HepG2 (cell line): ENCODE measurements at regions of chr10 and their contacts with region 1.

Region 1: DNA sequence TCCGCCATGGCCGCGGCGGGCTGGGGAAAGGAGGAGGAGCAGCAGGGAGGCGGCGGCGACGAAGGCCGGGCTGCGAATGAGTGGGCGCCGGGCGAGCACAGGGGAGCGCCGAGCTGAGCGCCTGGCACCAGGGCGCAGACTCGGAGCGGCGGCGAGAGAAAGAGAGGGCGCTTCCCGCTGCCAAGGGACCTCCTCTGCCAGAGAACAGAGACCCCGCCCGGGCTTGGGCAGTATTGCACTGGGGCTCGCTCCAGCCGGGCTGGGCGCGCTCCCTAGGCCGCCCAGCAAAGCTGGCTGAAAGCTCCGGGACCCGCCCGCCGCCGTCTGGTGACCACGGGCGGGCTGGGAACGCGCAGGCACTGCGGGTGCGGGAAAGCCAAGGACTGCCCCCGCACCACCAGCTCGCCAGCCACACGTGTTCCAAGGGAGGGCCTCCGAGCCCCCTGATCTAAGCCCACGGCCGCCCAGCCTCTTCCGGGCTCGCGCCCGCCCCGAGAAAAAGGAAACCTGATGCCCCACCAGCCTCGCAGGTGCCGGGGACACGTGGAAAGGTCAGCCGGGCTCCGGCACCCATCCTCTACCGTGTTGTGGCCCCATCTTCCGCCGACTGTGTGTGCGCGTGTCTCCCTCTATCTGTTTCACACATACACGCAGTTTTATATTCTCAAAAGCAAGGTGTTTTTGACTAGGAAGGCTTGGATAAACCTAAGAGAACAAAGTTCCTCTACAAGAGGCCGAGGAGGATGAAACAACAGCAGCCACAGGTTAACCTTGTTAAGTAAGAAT is at the start of gene CCDC6:
- DNase-seq: peak; percentile 86
- ATAC-seq: peak; percentile 93
- H3K4me3 ChIP-seq: peak within 1 kb of the TSS; percentile 94 to 100 (median 97)
- H3K27ac ChIP-seq: peak within 1 kb of the TSS; percentile 90
- H3K4me1 ChIP-seq: peaks cover 53% of the 10 kb centered on the region
- H3K27me3 ChIP-seq: no peaks in the 10 kb centered on the region; a peak in 1 of 5 replicates
- CTCF ChIP-seq: peak; percentile 87
- EP300 ChIP-seq: no peak
- POLR2A ChIP-seq: peak; percentile 78 to 81
- RAD21 ChIP-seq: peak; percentile 77
- total RNA-seq, gene CCDC6: 18.3 and 34.1 TPM in 2 replicates

Region 2: DNA sequence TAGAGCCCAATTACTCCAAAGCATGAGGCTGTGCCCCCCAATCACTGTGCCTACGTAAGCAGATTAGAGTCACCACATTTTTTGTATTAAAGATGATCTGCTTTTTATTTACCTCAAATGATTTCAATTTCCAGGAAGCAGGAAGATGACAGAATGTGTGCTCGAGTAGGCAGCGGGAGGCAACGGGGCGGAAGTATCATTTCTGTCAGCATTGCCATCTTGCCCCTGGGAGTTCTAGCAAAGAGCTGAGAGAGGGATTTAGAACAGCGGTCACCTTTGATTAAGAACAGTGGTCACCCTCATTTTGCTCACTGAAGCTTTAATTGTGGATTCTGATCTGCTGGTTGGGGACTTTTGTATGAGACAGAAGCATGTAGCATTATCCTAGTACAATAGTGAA is 427.2 kb before region 1 on chr10:
- CTCF ChIA-PET with region 1: no interaction called
- POLR2A ChIA-PET with region 1: no interaction called
- in situ Hi-C with region 1: no loop called
- intact Hi-C with region 1: no loop called
- DNase-seq: no peak
- ATAC-seq: no peak
- H3K4me3 ChIP-seq: no peak overlapping the region
- H3K27ac ChIP-seq: no peak overlapping the region
- H3K4me1 ChIP-seq: no peaks in the 10 kb centered on the region
- H3K27me3 ChIP-seq: no peaks in the 10 kb centered on the region; a peak in 1 of 5 replicates
- CTCF ChIP-seq: no peak
- EP300 ChIP-seq: no peak
- POLR2A ChIP-seq: no peak
- RAD21 ChIP-seq: no peak

Region 3: DNA sequence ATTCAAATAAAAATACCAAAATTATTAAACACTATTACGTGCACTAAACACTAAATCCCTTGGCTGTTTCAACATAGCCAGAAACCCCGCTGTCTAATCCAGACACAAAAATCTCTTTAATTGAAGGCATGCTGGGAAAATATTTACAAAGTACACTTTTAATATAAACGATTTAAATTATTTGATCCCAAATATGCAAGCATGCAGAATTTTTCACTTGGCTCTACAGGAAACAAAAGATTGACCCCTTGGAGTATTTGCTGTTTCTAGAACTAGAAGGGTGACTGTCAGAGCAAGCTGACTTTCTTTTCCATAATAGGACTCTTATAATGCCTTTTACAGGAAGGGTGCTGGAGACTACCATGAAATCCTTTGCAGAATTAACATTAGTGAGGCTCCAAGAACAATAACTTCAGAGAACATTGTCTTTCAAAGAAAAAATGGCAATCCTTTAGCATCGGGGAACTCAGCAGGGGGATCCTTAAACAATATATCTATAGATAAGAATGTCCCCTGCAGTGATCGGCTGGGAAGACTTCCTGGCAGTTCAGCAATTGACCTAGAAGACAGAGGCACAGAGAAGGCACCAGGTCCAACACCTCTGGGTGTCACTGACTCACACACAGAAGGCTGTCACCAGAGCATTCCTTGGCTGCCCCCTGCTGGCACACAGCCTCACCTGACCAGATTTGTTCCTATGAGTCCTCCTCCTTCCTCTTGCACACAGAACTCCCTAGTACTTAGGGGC is 97.5 kb before region 1 on chr10:
- CTCF ChIA-PET with region 1: no interaction called
- POLR2A ChIA-PET with region 1: no interaction called
- in situ Hi-C with region 1: no loop called
- intact Hi-C with region 1: no loop called
- DNase-seq: peak; percentile 64
- ATAC-seq: peak; percentile 98
- H3K4me3 ChIP-seq: no peak overlapping the region
- H3K27ac ChIP-seq: no peak overlapping the region
- H3K4me1 ChIP-seq: no peaks in the 10 kb centered on the region
- H3K27me3 ChIP-seq: no peaks in the 10 kb centered on the region
- CTCF ChIP-seq: peak; percentile 90
- EP300 ChIP-seq: no peak
- POLR2A ChIP-seq: no peak
- RAD21 ChIP-seq: peak; percentile 67

Region 4: DNA sequence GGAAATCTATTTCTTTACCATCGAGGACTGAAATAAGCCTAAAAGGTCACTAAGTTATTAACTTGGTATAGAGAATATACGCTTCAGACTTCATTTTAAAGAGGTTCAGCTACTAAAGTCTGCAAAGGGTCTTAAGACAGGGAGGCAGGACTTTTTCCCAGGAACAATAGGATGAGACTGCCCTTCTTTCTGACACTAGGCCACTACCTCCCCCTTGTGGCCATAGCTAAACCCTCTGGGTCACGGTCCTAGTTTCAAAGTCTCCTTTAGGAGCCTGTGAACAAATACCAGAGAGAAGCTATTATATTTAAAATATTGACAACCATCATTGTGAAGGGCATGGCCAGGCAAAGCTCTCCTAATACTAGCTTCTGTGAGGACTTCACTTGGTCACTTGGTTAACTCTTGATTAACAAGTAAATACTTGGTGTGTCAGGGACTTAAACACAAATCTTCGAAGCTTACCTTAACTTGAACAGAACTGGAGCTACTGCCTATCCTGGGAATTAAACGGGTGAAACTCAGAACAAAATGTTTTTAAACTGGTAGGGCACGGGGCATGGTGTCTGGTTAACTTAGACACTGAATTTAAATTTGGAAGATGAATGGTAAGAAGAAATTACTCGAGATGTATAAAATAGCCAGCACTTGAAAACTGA is 75.9 kb before region 1 on chr10:
- CTCF ChIA-PET with region 1: no interaction called
- POLR2A ChIA-PET with region 1: no interaction called
- in situ Hi-C with region 1: no loop called
- intact Hi-C with region 1: loop called (anchors 1 kb)
- DNase-seq: peak; percentile 38
- ATAC-seq: peak; percentile 90
- H3K4me3 ChIP-seq: no peak overlapping the region
- H3K27ac ChIP-seq: no peak overlapping the region
- H3K4me1 ChIP-seq: no peaks in the 10 kb centered on the region
- H3K27me3 ChIP-seq: no peaks in the 10 kb centered on the region
- CTCF ChIP-seq: peak; percentile 73
- EP300 ChIP-seq: no peak
- POLR2A ChIP-seq: no peak
- RAD21 ChIP-seq: no peak

Region 5: GRCh38 chr10:59865101-59865500 is 41.5 kb before region 1 on chr10:
- CTCF ChIA-PET with region 1: no interaction called
- POLR2A ChIA-PET with region 1: no interaction called
- in situ Hi-C with region 1: no loop called
- intact Hi-C with region 1: loop called (anchors 1 kb)
- DNase-seq: peak; percentile 33
- ATAC-seq: peak; percentile 76
- H3K4me3 ChIP-seq: no peak overlapping the region
- H3K27ac ChIP-seq: no peak overlapping the region
- H3K4me1 ChIP-seq: peaks cover 7% of the 10 kb centered on the region; the same call in 1 of the 2 replicates
- H3K27me3 ChIP-seq: no peaks in the 10 kb centered on the region
- CTCF ChIP-seq: peak; percentile 54
- EP300 ChIP-seq: no peak
- POLR2A ChIP-seq: no peak
- RAD21 ChIP-seq: peak; percentile 59; the same call in 1 of the 2 replicates

Region 6: GRCh38 chr10:59894114-59894513 is 12.5 kb before region 1 on chr10:
- CTCF ChIA-PET with region 1: no interaction called
- POLR2A ChIA-PET with region 1: interaction called, 19 read pairs
- in situ Hi-C with region 1: no loop called
- intact Hi-C with region 1: loop called (anchors 1 kb)
- DNase-seq: no peak
- ATAC-seq: no peak
- H3K4me3 ChIP-seq: no peak overlapping the region
- H3K27ac ChIP-seq: no peak overlapping the region
- H3K4me1 ChIP-seq: peaks cover 31% of the 10 kb centered on the region
- H3K27me3 ChIP-seq: no peaks in the 10 kb centered on the region
- CTCF ChIP-seq: no peak
- EP300 ChIP-seq: no peak
- POLR2A ChIP-seq: no peak
- RAD21 ChIP-seq: no peak

Region 7: DNA sequence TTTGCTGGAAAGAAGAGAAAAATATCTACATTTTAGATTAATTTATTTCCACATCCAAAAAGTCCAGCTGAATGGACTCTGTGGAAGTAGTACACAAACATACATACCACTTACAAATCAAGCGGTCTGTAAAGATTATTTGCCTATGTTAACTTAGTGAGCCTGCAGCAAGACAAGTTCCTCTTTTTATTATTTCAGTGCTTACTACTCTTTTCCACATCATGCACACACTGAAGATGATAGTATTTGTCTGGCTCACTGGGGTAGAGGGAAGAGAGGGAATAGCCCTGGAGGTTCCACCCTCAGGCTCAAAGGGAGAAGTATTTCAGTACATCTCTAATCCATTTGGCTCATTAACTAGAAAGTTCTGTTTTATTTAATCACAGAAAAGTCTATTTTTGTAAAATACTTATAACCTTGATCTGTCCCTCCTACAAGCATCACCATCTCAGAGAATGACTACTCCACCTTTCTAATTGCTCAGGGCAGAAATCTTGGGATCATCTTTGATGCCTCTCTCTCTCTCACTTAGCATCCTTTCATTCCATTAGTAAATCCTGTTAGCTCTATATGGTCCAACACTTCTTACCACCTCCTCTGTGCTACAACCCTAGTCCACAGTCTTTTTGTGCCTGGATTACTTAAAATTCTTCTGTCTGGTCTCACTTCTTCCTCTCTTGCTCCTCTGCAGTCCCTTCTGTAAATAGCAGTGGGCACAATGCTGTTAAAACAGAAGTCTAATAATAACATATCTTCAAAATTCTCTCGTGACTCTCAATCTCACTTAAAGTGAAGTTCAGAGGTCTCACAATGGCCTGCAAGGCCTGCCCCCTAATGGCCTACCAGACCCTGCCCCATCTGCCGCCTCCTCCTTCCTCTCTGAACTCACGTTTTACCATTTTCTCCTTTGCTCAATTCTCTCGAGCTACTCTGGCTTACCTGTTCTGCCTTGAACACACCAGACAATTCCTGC is 64.1 kb after region 1 on chr10:
- CTCF ChIA-PET with region 1: no interaction called
- POLR2A ChIA-PET with region 1: interaction called, 7 read pairs
- in situ Hi-C with region 1: no loop called
- intact Hi-C with region 1: loop called (anchors 5 kb)
- DNase-seq: no peak
- ATAC-seq: no peak
- H3K4me3 ChIP-seq: no peak overlapping the region
- H3K27ac ChIP-seq: no peak overlapping the region
- H3K4me1 ChIP-seq: peaks cover 23% of the 10 kb centered on the region
- H3K27me3 ChIP-seq: no peaks in the 10 kb centered on the region; a peak in 1 of 5 replicates
- CTCF ChIP-seq: no peak
- EP300 ChIP-seq: no peak
- POLR2A ChIP-seq: no peak
- RAD21 ChIP-seq: no peak

Region 8: DNA sequence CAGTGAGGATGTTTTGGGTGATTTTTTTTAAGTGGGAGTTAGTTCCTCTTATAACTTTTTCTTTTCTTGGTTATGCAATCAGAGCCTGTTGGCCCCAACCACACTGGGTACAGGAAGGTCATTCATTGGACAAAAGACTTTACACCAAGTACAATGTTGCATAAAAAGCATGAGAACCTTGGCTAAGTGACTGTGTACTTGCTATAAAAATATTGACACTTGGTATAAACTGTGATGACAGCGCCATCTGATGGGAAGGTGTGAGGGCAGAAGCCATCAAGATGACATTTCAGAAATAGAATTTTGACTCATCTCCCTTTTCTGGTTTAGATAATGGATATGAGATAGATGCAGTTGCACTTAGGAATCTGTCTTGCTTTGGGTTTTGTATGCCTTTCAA is 126.1 kb after region 1 on chr10:
- CTCF ChIA-PET with region 1: no interaction called
- POLR2A ChIA-PET with region 1: no interaction called
- in situ Hi-C with region 1: no loop called
- intact Hi-C with region 1: loop called (anchors 5 kb)
- DNase-seq: peak; percentile 62
- ATAC-seq: peak; percentile 77
- H3K4me3 ChIP-seq: no peak overlapping the region
- H3K27ac ChIP-seq: no peak overlapping the region
- H3K4me1 ChIP-seq: no peaks in the 10 kb centered on the region
- H3K27me3 ChIP-seq: no peaks in the 10 kb centered on the region
- CTCF ChIP-seq: peak; percentile 71
- EP300 ChIP-seq: no peak
- POLR2A ChIP-seq: no peak
- RAD21 ChIP-seq: peak; percentile 36; the same call in 1 of the 2 replicates

Region 9: GRCh38 chr10:60105295-60105695 is 198.7 kb after region 1 on chr10:
- CTCF ChIA-PET with region 1: no interaction called
- POLR2A ChIA-PET with region 1: no interaction called
- in situ Hi-C with region 1: no loop called
- intact Hi-C with region 1: no loop called
- DNase-seq: no peak
- ATAC-seq: no peak
- H3K4me3 ChIP-seq: no peak overlapping the region
- H3K27ac ChIP-seq: no peak overlapping the region
- H3K4me1 ChIP-seq: no peaks in the 10 kb centered on the region
- H3K27me3 ChIP-seq: peaks cover 0 to 3% of the 10 kb centered on the region in 2 experiments; a peak in 1 of 5 replicates
- CTCF ChIP-seq: no peak
- EP300 ChIP-seq: no peak
- POLR2A ChIP-seq: no peak
- RAD21 ChIP-seq: no peak